KBM-7 (cell line): ENCODE measurements at regions of chr4 and their contacts with region 1.

Region 1: GRCh38 chr4:168183717-168184608 is 91.6 kb downstream of the ANXA10 start:
- DNase-seq: peak; percentile 37

Region 2: GRCh38 chr4:168070903-168071302 is 113.1 kb before region 1 on chr4:
- in situ Hi-C with region 1: no loop called
- DNase-seq: no peak

Region 3: DNA sequence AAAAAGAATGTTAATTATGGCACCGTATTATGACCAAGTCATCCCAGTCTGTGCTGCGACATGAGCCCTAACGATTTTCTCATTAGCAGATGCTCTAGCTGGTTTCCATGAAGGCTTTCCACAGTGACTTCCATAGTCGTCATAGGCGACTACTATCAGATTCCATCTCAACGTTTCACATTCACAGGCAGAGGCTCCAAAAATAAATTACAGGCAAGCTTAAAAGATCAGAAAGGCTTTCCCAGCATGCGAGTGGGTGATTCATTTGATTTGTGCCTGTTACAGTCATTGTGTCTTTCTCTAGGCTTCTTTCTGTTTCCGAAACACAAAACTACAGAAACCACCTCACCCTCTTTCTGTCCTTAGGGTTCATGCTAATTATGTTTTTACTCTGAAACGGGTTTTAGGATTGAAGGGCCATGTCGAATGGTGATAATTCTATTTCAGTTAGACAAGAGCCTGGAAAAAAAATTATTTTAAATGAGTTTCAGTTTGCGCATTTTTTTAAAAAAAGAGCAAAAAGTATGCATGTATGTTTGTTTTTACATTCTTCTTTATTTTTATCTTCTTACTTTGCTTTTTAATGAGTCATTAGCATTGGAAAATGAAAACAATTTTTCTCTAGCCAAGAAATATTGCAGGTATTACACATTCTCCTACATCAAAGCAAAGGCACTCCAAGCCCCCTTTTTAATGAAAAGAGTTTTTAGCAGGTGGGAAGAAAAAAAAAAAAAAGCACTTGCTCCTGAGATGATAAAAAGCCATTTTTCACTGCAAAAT is 356.3 kb after region 1 on chr4:
- in situ Hi-C with region 1: no loop called
- DNase-seq: no peak

Region 4: GRCh38 chr4:168923526-168924194 is 739.7 kb after region 1 on chr4:
- in situ Hi-C with region 1: loop called (anchors 25 kb)
- DNase-seq: peak; percentile 59